ENCODE measurements at regions of chr17 and their contacts with region 1.

Region 1: GRCh38 chr17:17985555-17985954 is 12.9 kb downstream of the DRC3 start:
- DNase-seq: no peak
- H3K4me3 ChIP-seq: no peak overlapping the region
- H3K27ac ChIP-seq: no peak overlapping the region
- H3K4me1 ChIP-seq: peaks cover 16% of the 10 kb centered on the region
- H3K27me3 ChIP-seq: no peaks in the 10 kb centered on the region
- CTCF ChIP-seq: peak in 1 of 2 donors; percentile 39

Region 2: DNA sequence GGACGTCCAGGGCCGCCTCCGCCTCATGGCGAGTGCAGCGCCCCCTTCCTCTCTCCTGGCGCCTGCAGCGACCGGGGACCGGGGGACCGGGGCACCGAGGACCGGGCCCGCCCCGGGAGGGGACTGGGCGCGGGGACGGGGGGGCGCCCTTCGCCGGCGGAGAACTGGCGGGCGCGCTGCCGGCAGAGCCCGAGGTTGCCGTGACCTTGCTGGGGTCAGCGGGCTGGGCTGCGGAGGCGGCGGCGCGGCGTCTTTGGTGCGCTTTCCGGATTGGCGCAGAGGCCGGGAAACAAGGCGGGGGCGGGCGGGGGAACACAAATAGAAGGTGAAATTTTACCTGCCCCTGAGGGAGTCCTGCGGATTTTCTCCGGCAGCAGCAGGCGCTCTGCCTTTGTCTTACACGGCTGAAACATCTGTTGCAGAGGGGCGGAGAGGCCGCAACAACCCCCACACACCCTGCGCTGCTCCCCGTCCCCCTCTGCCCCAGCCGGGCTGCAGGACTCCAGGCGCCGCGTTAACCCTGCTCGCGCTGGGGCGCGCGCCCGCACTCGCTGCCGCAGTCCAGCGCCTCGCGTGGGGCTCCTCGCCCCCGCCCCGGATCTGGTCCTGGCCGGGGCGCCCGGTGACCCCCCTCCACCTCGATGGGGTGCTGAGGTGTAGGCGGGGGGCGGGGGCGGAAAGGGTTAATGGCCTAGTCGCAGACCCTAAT is 202.3 kb before region 1 on chr17:
- CTCF ChIA-PET with region 1: no interaction called
- dilution Hi-C with region 1: no loop called
- in situ Hi-C with region 1: no loop called
- intact Hi-C with region 1: no loop called
- DNase-seq: peak; percentile 50
- H3K4me3 ChIP-seq: peak overlapping the region in 2 of 3 experiments; percentile 30 to 44
- H3K27ac ChIP-seq: no peak overlapping the region
- H3K4me1 ChIP-seq: peaks cover 48% of the 10 kb centered on the region
- H3K27me3 ChIP-seq: no peaks in the 10 kb centered on the region
- CTCF ChIP-seq: peak in 1 of 2 donors; percentile 24

Region 3: GRCh38 chr17:17890773-17891759 is 94.5 kb before region 1 on chr17:
- CTCF ChIA-PET with region 1: no interaction called
- dilution Hi-C with region 1: loop called (anchors 5 kb)
- in situ Hi-C with region 1: no loop called
- intact Hi-C with region 1: no loop called
- DNase-seq: peak; percentile 57
- H3K4me3 ChIP-seq: no peak overlapping the region
- H3K27ac ChIP-seq: no peak overlapping the region
- H3K4me1 ChIP-seq: no peaks in the 10 kb centered on the region
- H3K27me3 ChIP-seq: no peaks in the 10 kb centered on the region
- CTCF ChIP-seq: peak; percentile 86 to 95

Region 4: GRCh38 chr17:18025945-18026776 is 40.6 kb after region 1 on chr17:
- CTCF ChIA-PET with region 1: no interaction called
- dilution Hi-C with region 1: loop called (anchors 5 kb)
- in situ Hi-C with region 1: no loop called
- intact Hi-C with region 1: no loop called
- DNase-seq: peak; percentile 68
- H3K4me3 ChIP-seq: no peak overlapping the region
- H3K27ac ChIP-seq: peak overlapping the region; percentile 80
- H3K4me1 ChIP-seq: peaks cover 37% of the 10 kb centered on the region
- H3K27me3 ChIP-seq: no peaks in the 10 kb centered on the region
- CTCF ChIP-seq: peak in 1 of 2 donors; percentile 19

Region 5: DNA sequence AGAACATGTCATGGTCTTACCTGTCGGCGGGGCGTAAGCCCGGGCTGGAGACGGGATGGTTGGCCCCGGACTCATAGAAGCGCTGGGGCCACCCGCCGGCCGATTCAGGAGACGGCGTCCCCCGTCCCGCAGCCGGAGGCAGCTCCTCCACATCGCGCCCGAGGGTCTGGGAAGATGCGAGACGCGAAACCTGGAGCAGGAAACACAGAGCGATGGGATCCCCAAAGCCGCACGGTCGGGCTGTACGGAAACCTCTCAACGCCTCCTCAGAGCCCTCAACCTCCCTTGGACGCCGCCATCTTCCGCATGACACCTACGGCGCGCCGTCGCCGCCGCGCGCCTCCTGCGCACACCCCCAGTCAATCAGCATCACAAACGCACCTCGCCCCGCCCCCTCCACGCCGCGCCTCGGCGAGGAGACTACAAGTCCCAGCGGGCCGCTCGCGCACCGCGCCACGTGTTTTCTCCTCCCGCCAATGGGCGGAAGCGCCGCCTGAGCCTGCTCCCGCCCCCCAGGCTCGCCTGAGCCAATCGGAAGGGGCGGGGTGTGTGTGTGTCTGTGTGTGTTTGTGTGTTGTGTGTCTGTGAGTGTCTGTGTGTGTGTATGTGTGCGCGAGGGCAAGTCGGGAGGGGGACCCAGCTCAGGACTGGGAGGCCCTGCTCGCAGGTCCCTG is 53.4 kb after region 1 on chr17 and contains the starts of genes ATPAF2 and GID4:
- CTCF ChIA-PET with region 1: no interaction called
- dilution Hi-C with region 1: no loop called
- in situ Hi-C with region 1: no loop called
- intact Hi-C with region 1: loop called (anchors 1 kb)
- DNase-seq: peak; percentile 99
- H3K4me3 ChIP-seq: peak within 1 kb of the TSS; percentile 88 to 90 (median 89)
- H3K27ac ChIP-seq: peak within 1 kb of the TSS; percentile 65
- H3K4me1 ChIP-seq: peaks cover 24% of the 10 kb centered on the region
- H3K27me3 ChIP-seq: no peaks in the 10 kb centered on the region
- CTCF ChIP-seq: peak in 1 of 2 donors; percentile 32
- total RNA-seq, gene ATPAF2: 17.0 to 23.5 TPM
- total RNA-seq, gene GID4: 11.2 to 16.4 TPM

Measured in mammary epithelial cell (primary cell).